ENCODE measurements at regions of chr1 and their contacts with region 1.

Region 1: GRCh38 chr1:164191191-164191590 is 367.8 kb upstream of the PBX1 start:
- DNase-seq: no peak
- ATAC-seq: no peak
- H3K4me3 ChIP-seq: no peak overlapping the region
- H3K27ac ChIP-seq: no peak overlapping the region
- H3K4me1 ChIP-seq: no peaks in the 10 kb centered on the region
- H3K27me3 ChIP-seq: no peaks in the 10 kb centered on the region
- CTCF ChIP-seq: no peak

Region 2: DNA sequence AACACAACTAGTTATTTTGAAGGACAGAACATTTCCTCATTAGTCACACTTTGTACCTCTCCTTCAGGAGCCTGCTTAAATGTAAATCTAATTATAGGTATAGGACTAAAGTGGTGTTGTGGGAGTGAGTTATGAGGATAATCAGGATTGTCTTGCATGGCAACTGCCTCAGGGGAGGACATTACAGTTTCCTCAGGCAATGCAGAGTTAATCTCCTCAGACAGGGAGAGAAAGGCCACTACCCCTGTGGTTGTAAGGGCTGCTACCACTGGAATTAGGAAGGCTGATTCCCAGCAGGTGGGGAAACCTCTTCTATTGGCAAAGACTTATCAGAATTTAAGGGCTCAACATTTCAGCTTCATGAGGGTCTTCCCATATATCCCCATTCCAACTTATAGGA is 81.0 kb after region 1 on chr1:
- intact Hi-C with region 1: loop called in 1 of 10 experiments (anchors 10 kb)
- DNase-seq: no peak
- ATAC-seq: no peak
- H3K4me3 ChIP-seq: no peak overlapping the region
- H3K27ac ChIP-seq: no peak overlapping the region
- H3K4me1 ChIP-seq: no peaks in the 10 kb centered on the region
- H3K27me3 ChIP-seq: no peaks in the 10 kb centered on the region
- CTCF ChIP-seq: no peak

Measured in heart right ventricle (tissue), 16 donors.